CD8-positive, alpha-beta memory T cell (primary cell): ENCODE measurements at regions of chr19 and their contacts with region 1.

Region 1: GRCh38 chr19:19508217-19508616 is 7.1 kb downstream of the TSSK6 start:
- DNase-seq: no peak
- H3K4me3 ChIP-seq: no peak overlapping the region
- H3K4me3 Mint-ChIP-seq: no peak overlapping the region
- H3K27ac ChIP-seq: no peak overlapping the region
- H3K27ac Mint-ChIP-seq: peak overlapping the region in 2 of 8 donors; percentile 60 to 88
- H3K4me1 ChIP-seq: no peaks in the 10 kb centered on the region
- H3K4me1 Mint-ChIP-seq: peaks cover 0 to 3% (median 0%) of the 10 kb centered on the region in 3 donors
- H3K27me3 ChIP-seq: no peaks in the 10 kb centered on the region
- H3K27me3 Mint-ChIP-seq: no peaks in the 10 kb centered on the region

Region 2: GRCh38 chr19:19445911-19446361 is 62.3 kb before region 1 on chr19:
- CTCF ChIA-PET with region 1: no interaction called
- POLR2A ChIA-PET with region 1: interaction called, 14 read pairs
- DNase-seq: peak in 1 of 5 donors; percentile 31
- H3K4me3 ChIP-seq: no peak overlapping the region
- H3K4me3 Mint-ChIP-seq: peak overlapping the region; percentile 3 to 80 (median 68)
- H3K27ac ChIP-seq: peak overlapping the region; percentile 14
- H3K27ac Mint-ChIP-seq: peak overlapping the region; percentile 10 to 98 (median 80)
- H3K4me1 ChIP-seq: peaks cover 81% of the 10 kb centered on the region
- H3K4me1 Mint-ChIP-seq: peaks cover 71 to 85% (median 82%) of the 10 kb centered on the region in 3 donors
- H3K27me3 ChIP-seq: no peaks in the 10 kb centered on the region
- H3K27me3 Mint-ChIP-seq: no peaks in the 10 kb centered on the region

Region 3: DNA sequence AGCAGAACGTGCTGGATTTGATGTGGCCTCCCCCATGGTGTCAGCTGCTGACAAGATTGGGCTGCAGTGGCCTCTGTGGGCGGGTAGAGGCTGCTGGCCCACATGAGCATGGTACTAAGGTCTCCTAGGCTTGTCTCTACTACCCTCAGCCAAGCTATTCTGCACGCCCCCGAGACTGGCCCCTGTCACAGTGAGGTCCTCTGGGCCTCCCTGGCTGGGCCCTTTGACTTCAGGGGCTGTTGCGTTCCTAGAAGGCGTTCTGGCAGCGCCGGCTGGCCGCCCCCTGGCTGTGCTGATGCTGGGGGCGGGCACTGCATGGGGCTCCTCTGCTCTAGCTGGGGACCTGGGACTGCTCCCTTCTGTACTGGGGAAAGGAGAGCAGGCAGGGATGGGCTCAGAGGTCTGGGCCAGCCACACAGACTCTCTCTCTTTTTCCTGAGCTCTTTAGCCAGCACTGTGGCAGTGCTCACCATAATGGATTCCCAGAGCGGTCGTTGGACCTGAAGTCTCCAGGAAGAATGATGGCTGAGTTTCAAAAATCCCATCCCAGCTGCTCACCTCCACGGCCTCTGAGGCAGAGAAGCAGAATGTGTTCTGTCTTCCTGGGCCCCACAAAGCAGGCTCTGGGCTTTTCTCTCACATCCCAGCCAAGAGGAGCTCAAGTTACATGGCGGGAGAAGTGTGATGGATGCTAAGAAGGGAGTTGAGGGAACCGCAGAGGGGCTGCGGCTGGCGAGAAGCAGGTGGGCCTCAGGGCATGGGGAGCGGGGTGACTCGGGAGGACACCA is 25.2 kb before region 1 on chr19:
- CTCF ChIA-PET with region 1: no interaction called
- POLR2A ChIA-PET with region 1: no interaction called
- DNase-seq: peak in 1 of 5 donors; percentile 32
- H3K4me3 ChIP-seq: no peak overlapping the region
- H3K4me3 Mint-ChIP-seq: no peak overlapping the region
- H3K27ac ChIP-seq: no peak overlapping the region
- H3K27ac Mint-ChIP-seq: peak overlapping the region; percentile 46 to 95 (median 78)
- H3K4me1 ChIP-seq: peaks cover 48% of the 10 kb centered on the region
- H3K4me1 Mint-ChIP-seq: peaks cover 41 to 80% (median 45%) of the 10 kb centered on the region in 3 donors
- H3K27me3 ChIP-seq: no peaks in the 10 kb centered on the region
- H3K27me3 Mint-ChIP-seq: no peaks in the 10 kb centered on the region

Region 4: GRCh38 chr19:20005766-20006165 is 497.5 kb after region 1 on chr19:
- CTCF ChIA-PET with region 1: no interaction called
- POLR2A ChIA-PET with region 1: no interaction called
- DNase-seq: no peak
- H3K4me3 ChIP-seq: no peak overlapping the region
- H3K4me3 Mint-ChIP-seq: no peak overlapping the region
- H3K27ac ChIP-seq: no peak overlapping the region
- H3K27ac Mint-ChIP-seq: no peak overlapping the region
- H3K4me1 ChIP-seq: no peaks in the 10 kb centered on the region
- H3K4me1 Mint-ChIP-seq: peaks cover 0 to 4% (median 0%) of the 10 kb centered on the region in 3 donors
- H3K27me3 ChIP-seq: no peaks in the 10 kb centered on the region
- H3K27me3 Mint-ChIP-seq: no peaks in the 10 kb centered on the region